ENCODE measurements at regions of chr15 and their contacts with region 1.

Region 1: DNA sequence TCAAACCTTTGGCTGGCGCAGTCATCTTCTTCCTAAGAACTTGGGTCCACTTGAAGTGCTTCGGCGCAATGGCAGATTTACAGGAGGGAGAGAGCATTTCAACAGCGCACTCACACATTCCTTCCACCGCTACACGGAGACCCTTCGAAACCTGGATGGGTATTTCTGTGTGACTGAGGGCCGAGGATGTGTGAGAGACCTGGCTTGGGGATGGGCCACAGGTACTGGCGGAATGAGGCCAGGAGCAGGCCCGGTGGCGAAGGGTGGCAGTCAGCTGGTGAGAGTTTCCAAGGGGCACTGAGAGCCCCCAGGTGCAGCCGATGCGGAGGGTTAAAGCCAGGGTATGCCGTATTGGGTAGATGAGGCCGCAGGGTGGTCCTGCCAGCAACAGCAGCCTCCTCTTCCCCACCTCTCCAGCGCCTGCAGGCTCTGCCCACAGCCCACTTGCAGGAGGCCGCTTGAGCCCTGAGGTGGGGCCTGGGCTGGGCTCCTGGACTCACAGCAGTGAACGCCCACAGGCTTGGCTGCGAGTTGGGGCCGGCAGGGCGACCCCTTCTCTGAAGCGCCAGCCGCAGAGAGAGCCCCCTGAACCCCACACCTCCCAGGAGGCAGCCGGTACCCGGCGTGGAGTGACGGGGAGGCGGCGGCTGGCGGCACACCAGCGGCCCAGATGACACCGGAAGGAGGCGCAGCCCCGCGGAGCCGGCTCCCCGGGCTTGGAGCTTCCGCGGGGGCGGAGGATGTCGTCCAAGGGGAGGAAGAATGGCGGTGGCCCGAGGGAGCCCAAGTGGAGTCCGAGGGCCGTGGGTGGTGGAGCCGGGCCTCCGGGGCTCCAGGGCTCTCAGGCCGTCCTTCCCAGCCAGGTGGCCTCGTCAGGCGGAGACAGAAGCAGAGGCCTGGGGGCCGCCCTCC is 166.5 kb downstream of the NSMCE3 start:
- DNase-seq: no peak
- ATAC-seq: no peak
- H3K4me3 ChIP-seq: no peak overlapping the region
- H3K27ac ChIP-seq: no peak overlapping the region
- H3K4me1 ChIP-seq: peaks cover 0 to 3% of the 10 kb centered on the region in 2 experiments; a peak in 2 of 4 replicates
- H3K27me3 ChIP-seq: no peaks in the 10 kb centered on the region
- CTCF ChIP-seq: no peak
- POLR2A ChIP-seq: no peak
- RAD21 ChIP-seq: no peak

Region 2: GRCh38 chr15:29090617-29091466 is 12.3 kb before region 1 on chr15:
- CTCF ChIA-PET with region 1: interaction called, 30 read pairs
- POLR2A ChIA-PET with region 1: interaction called, 3 read pairs
- RAD21 ChIA-PET with region 1: no interaction called
- intact Hi-C with region 1: no loop called
- DNase-seq: peak; percentile 12
- ATAC-seq: peak; percentile 91
- H3K4me3 ChIP-seq: no peak overlapping the region
- H3K27ac ChIP-seq: no peak overlapping the region
- H3K4me1 ChIP-seq: no peaks in the 10 kb centered on the region
- H3K27me3 ChIP-seq: no peaks in the 10 kb centered on the region
- CTCF ChIP-seq: peak; percentile 23 to 97 (median 89); a peak in 5 of 6 replicates
- POLR2A ChIP-seq: no peak
- RAD21 ChIP-seq: peak; percentile 40; the same call in 1 of the 2 replicates

Region 3: DNA sequence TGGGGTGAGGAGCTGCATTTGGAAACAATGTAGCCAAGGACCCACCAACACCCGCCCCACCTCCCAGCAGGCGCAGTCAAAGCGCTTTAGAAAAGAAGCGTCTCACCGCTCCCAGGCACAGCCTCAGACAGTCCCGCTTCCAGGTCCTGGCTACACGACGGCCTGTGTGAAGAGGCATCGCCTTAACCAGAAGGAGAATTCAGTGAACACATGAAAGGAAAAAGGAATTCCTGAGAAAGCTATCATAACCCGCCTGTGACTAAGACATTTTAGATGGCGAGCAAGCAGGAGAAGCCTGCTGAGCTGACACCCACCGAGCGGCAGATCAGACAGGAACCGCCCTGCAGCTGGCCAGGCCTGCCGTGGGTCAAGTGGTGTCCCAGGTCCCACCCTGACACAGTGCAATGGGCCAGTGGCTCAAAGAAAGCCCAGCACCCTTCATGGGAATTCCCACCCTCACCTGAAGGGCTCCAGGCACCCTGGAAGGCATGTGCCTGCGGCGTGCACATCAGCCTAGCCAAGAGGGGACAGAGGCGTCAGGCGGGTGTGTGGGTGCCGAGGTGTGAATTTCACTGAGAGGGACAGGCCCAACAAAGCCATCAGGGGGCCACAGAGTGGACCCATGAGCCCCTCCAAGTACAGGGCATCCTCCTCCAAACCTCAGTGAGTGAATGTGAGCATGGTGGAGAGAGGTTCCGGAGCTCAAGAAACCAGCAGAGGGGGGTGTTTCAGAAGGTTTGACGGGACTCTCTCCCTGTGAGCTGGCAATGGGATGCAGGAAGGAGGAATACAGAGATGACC is 21.6 kb after region 1 on chr15:
- CTCF ChIA-PET with region 1: interaction called, 11 read pairs
- POLR2A ChIA-PET with region 1: no interaction called
- RAD21 ChIA-PET with region 1: no interaction called
- intact Hi-C with region 1: no loop called
- DNase-seq: peak; percentile 73
- ATAC-seq: peak; percentile 87
- H3K4me3 ChIP-seq: no peak overlapping the region
- H3K27ac ChIP-seq: no peak overlapping the region
- H3K4me1 ChIP-seq: peaks cover 18 to 26% of the 10 kb centered on the region in 2 experiments
- H3K27me3 ChIP-seq: peaks cover 19% of the 10 kb centered on the region
- CTCF ChIP-seq: peak in 2 of 3 experiments; percentile 40 to 44; a peak in 4 of 6 replicates
- POLR2A ChIP-seq: no peak
- RAD21 ChIP-seq: peak; percentile 27; the same call in 1 of the 2 replicates

Region 4: DNA sequence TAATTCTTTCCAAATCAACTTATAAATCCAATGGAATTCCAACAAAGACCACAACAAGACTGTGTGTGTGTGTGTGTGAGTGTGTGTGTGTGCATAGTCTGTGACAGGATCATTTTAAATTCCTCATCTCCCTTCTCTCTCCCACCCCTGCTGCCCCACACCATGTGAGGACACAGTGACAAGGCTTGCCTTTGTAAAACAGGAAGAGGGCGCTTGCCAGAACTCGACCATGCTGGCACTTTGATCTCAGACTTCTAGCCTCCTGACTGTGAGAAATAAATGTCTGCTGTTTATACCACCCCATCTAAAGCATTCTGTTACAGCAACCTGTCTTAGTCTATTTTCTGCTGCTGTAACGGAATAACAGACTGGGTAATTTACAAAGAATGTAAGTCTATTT is 67.4 kb after region 1 on chr15:
- CTCF ChIA-PET with region 1: no interaction called
- POLR2A ChIA-PET with region 1: no interaction called
- RAD21 ChIA-PET with region 1: no interaction called
- intact Hi-C with region 1: no loop called
- DNase-seq: no peak
- ATAC-seq: no peak; the same call in 1 of the 2 replicates
- H3K4me3 ChIP-seq: no peak overlapping the region
- H3K27ac ChIP-seq: no peak overlapping the region
- H3K4me1 ChIP-seq: no peaks in the 10 kb centered on the region
- H3K27me3 ChIP-seq: peaks cover 41% of the 10 kb centered on the region
- CTCF ChIP-seq: no peak
- POLR2A ChIP-seq: no peak
- RAD21 ChIP-seq: no peak

Region 5: GRCh38 chr15:29196290-29196689 is 93.1 kb after region 1 on chr15:
- CTCF ChIA-PET with region 1: no interaction called
- POLR2A ChIA-PET with region 1: no interaction called
- RAD21 ChIA-PET with region 1: no interaction called
- intact Hi-C with region 1: no loop called
- DNase-seq: no peak
- ATAC-seq: no peak
- H3K4me3 ChIP-seq: no peak overlapping the region
- H3K27ac ChIP-seq: no peak overlapping the region
- H3K4me1 ChIP-seq: no peaks in the 10 kb centered on the region
- H3K27me3 ChIP-seq: peaks cover 70% of the 10 kb centered on the region
- CTCF ChIP-seq: no peak
- POLR2A ChIP-seq: no peak
- RAD21 ChIP-seq: no peak

Measured in HCT116 (cell line).